Calu3 (cell line): ENCODE measurements at regions of chr6 and their contacts with region 1.

Region 1: GRCh38 chr6:29466241-29466640 is 9.3 kb downstream of the OR2H1 start:
- DNase-seq: no peak
- H3K4me3 Mint-ChIP-seq: no peak overlapping the region
- H3K27ac Mint-ChIP-seq: no peak overlapping the region
- H3K4me1 Mint-ChIP-seq: peaks cover 14% of the 10 kb centered on the region
- H3K27me3 Mint-ChIP-seq: no peaks in the 10 kb centered on the region
- CTCF ChIP-seq: no peak

Region 2: DNA sequence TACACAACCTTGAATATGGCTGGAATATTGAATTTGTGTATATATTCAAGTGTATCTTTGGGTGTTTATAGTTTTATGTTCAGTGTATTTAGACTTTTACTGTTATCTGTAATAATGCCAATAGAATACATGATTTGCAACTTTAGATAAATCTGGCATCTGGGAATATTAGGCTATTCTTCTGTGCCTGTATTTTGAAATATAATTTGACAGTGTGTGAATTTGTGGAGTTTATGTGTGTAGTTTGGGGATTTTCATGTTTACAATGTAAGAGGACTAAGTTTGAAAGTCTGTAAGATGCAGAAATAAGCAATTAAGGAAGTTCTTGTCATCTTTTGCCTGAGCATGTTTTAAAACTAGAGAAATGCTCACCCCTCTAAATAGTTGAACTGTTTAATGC is 27.2 kb before region 1 on chr6 and contains the start of gene OR10C1:
- CTCF ChIA-PET with region 1: no interaction called
- intact Hi-C with region 1: no loop called
- DNase-seq: no peak
- H3K4me3 Mint-ChIP-seq: no peak within 1 kb of the TSS
- H3K27ac Mint-ChIP-seq: no peak within 1 kb of the TSS
- H3K4me1 Mint-ChIP-seq: no peaks in the 10 kb centered on the region
- H3K27me3 Mint-ChIP-seq: peaks cover 12% of the 10 kb centered on the region
- CTCF ChIP-seq: no peak
- total RNA-seq, gene OR10C1: not detected in 2 replicates

Region 3: DNA sequence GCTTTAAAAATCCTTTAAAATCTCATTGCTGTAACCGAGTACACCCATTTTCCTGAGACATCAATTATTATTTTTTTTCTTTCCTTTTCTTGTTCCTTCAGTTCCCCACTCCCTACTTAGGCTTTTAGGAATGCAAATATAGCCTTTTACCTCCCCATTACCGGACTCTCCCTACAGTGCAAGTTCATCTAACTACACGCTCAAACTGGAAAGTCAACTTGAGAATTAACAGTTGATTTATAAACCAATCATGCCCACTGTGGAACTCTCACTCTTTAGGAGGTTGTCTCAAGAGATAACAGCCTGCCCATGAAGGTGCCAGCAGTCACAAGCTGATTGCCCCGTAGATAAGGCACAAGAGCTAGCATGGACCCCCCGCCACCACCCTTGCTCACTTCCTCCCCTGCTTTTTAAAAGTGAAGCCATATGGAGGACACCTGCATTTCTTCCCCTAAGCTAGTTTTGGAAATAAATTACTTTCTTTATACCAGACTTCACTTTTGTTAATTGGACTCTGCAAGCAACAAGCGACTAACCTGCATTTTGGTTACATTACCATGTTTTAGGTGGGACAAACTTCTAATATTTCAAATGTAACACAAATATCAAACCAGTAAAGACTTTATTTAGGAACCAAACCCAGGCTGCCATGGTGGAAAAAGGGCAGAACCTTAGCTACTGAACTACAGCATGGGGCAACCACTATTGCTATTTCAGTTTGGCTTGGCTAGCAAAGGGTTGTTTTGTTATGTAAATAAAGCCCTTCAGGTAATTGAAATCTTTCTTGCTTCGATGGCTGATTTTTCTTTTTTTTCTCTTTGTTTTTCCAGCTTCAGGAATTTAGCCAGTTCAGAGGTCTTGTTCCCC is 58.4 kb after region 1 on chr6:
- CTCF ChIA-PET with region 1: no interaction called
- intact Hi-C with region 1: loop called (anchors 5 kb)
- DNase-seq: peak; percentile 22
- H3K4me3 Mint-ChIP-seq: peak overlapping the region; percentile 53
- H3K27ac Mint-ChIP-seq: peak overlapping the region; percentile 69
- H3K4me1 Mint-ChIP-seq: peaks cover 37% of the 10 kb centered on the region
- H3K27me3 Mint-ChIP-seq: no peaks in the 10 kb centered on the region
- CTCF ChIP-seq: no peak

Region 4: DNA sequence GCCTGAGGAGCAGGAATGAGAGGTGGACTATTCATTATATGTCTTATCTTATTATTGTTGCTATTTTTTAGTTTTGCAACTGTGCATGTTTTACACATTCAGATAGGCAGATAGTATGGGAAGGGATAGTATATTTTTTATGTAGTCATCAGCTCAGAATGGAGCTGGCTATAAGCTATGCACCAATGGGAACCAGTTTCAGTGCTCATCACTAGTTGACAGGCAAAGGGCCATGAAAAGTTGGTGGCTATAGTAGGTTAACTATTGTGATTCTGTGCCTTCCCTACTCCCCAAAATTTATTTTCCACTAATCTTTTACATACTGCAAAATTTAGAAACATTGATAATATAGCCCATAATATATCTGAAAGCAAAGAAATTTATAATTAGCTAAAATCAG is 98.6 kb after region 1 on chr6:
- CTCF ChIA-PET with region 1: no interaction called
- intact Hi-C with region 1: loop called (anchors 10 kb)
- DNase-seq: no peak
- H3K4me3 Mint-ChIP-seq: no peak overlapping the region
- H3K27ac Mint-ChIP-seq: no peak overlapping the region
- H3K4me1 Mint-ChIP-seq: peaks cover 28% of the 10 kb centered on the region
- H3K27me3 Mint-ChIP-seq: no peaks in the 10 kb centered on the region
- CTCF ChIP-seq: no peak

Region 5: DNA sequence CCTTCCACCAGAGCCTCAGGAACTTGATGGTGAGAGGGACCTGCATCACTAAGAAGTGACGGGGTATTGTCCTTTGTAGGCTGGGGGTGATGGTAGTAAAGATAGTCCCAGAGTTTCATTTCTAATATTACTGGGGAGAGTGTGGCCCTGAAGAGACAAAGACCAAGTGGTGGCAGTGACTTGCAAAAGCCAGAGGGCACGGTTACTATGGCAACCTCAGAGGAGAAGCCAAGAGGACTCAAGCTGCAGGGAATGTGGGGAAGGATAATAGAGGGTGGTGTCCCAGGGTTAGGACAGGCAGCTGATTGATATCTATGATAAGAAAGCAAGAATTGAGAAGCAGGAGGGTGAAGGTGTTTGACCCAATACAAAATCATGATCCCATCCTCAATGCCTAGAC is 403.9 kb after region 1 on chr6:
- CTCF ChIA-PET with region 1: no interaction called
- intact Hi-C with region 1: no loop called
- DNase-seq: no peak
- H3K4me3 Mint-ChIP-seq: no peak overlapping the region
- H3K27ac Mint-ChIP-seq: no peak overlapping the region
- H3K4me1 Mint-ChIP-seq: no peaks in the 10 kb centered on the region
- H3K27me3 Mint-ChIP-seq: peaks cover 72% of the 10 kb centered on the region
- CTCF ChIP-seq: no peak